Right lobe of liver (tissue), 6 donors: ENCODE measurements at regions of chr22 and their contacts with region 1.

Region 1: DNA sequence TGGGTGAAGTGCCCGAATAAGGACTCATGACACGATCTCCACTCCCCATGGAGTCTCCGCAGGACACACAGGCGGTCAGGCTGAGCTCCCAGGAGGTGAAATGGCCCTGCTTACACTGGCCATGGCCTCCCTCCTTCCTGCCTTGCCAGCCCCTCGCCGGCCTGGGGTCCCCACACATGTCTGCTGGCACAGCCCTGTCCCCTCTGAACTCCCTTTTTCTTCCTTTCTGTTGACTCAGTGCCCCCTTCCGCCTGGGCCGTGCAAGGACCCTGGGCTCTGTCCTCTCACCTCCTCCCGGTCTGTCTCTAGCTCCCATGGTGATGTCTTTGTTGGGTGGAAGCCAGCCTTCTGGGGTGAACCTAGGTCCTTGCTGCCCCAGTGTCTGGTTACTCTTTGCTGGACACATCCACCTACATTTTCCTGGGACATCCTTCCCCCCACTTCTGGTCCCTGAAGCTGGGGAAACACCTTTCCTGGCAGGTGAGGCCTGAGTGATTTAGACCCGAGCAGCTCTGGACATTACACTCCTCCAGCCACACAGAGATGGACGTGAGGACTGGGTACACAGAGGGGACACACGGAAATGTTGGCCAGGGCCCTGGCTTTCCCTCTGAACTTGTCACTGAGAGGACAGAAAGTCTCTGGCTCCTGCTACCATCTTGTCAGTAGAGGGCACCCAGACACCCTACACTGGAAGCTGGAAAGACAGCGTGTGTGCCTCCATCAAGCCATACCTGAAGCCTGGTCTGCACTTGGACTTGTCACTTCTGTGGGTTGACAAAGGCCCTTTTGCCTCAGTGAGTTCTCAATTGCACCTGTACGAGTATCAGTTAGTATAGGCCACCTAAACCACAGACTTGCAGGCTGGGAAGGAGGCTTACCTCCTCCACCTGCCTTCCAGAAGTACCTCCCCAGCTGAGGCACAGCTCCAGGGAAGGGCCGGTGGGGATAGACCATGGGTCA is 864.3 kb downstream of the TBC1D22A start:
- DNase-seq: no peak
- ATAC-seq: no peak
- H3K4me3 ChIP-seq: no peak overlapping the region
- H3K27ac ChIP-seq: no peak overlapping the region
- H3K4me1 ChIP-seq: no peaks in the 10 kb centered on the region
- H3K27me3 ChIP-seq: no peaks in the 10 kb centered on the region
- CTCF ChIP-seq: no peak
- POLR2A ChIP-seq: no peak

Region 2: DNA sequence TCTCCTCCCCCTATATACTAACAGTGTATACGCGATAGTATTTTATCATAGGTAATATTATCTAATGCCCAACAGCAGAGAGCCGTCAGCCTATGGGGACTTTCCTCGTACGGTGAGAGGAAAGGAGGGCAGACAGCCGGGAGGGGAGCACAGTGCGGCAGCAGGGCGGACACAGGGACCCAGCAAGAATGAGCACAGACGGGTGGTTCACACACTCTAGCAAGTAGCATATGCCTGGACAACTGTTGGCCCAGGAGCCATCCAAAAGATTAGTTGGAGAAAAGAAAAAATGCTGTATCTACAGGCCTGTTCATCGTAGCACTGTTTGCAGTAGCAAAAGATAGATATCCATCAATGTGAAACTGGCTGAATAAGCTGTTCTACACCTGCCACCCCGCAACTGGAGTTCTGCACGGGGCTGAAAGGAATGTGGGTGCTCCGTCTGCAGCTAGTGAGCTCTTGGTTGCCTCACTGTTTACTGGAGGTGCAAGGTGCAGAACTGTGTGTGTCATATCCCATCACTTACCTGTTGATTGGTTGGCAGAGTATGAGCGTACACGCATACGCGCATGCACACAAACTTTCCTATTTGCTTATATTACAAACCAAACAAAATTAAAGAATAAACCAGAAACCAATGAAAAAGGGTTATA is 540.0 kb before region 1 on chr22:
- intact Hi-C with region 1: no loop called
- DNase-seq: no peak
- ATAC-seq: peak in 3 of 4 donors; percentile 34 to 78 (median 37)
- H3K4me3 ChIP-seq: no peak overlapping the region
- H3K27ac ChIP-seq: no peak overlapping the region
- H3K4me1 ChIP-seq: no peaks in the 10 kb centered on the region
- H3K27me3 ChIP-seq: no peaks in the 10 kb centered on the region
- CTCF ChIP-seq: no peak
- POLR2A ChIP-seq: no peak

Region 3: DNA sequence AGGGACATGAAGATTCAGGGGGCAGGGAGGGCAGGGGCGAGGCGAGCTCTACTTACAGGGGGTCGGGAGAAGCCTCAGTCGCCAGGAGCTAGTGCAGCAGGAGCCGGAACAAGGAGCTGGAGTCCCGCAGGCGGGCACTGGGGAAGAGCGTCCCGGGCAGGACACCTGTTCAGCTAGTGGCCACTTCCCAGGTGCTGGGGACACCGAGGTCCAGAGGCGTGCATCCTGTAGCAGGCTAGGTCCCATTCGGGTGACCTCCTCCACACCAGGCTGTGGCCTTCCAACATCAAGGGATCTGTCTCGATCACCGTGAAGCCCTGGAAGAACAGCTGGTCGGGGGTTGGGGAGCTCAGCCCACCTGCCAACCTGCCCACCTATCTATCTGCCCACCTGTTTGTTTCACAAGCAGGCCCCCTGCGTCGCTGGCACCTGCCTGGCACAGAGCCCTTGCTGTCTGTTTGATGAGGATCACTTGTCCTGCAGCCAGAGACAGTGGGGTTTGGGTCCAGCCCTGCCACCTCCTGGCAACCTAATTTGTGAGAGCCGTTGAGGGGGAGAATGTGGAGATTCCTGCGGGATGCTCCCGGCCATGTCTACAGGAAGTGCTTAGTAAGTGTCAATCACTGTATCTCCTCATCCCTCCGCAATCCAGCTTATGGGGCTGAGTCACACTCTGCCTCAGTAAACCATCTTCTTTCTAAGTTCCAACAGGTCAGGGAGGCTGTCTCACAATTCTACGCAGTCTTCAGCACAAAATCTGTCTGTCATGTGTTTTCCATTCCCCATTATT is 1260.1 kb after region 1 on chr22:
- intact Hi-C with region 1: loop called in 1 of 2 experiments (anchors 10 kb)
- DNase-seq: peak in 1 of 3 donors; percentile 38
- ATAC-seq: no peak
- H3K4me3 ChIP-seq: no peak overlapping the region
- H3K27ac ChIP-seq: no peak overlapping the region
- H3K4me1 ChIP-seq: no peaks in the 10 kb centered on the region
- H3K27me3 ChIP-seq: no peaks in the 10 kb centered on the region
- CTCF ChIP-seq: no peak
- POLR2A ChIP-seq: no peak